ENCODE measurements at regions of chr5 and their contacts with region 1.

Region 1: DNA sequence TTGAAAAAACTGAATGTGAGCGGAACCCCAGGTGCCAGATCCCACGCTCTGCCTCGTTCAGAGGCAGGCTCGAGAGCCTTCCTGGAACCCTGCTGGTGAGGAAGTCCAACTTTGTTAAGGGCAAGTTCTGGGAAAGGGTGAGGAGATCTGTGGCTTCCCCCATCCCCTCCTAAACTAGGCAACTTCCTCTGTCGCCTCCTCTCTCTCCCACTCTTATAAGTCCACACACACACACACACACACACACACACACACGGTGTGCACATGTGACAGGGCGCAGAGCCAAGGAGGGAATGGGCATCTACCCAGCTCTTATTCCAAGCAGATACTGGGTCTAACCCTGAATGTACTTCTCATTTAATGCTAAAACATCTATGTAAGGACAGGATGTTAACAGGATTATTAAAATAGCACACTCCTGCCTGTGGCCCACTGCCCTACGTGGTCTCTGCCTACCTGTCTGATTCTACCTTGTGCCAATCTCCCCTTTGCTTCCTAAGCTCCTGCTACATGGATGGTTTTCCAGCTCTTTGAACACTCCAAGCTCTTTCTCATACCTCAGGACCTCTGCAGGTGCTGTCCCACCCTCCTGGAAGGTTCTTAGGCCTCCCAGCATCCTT is 72.4 kb upstream of the FBXW11 start:
- DNase-seq: no peak
- ATAC-seq: no peak
- H3K4me3 ChIP-seq: no peak overlapping the region
- H3K27ac ChIP-seq: no peak overlapping the region
- H3K4me1 ChIP-seq: peaks cover 4% of the 10 kb centered on the region; the same call in 1 of the 2 replicates
- H3K27me3 ChIP-seq: no peaks in the 10 kb centered on the region
- CTCF ChIP-seq: no peak
- POLR2A ChIP-seq: no peak
- RAD21 ChIP-seq: no peak

Region 2: GRCh38 chr5:172090976-172091547 is 12.2 kb after region 1 on chr5:
- CTCF ChIA-PET with region 1: interaction called, 6 read pairs
- POLR2A ChIA-PET with region 1: interaction called, 10 read pairs
- dilution Hi-C with region 1: no loop called
- in situ Hi-C with region 1: no loop called
- intact Hi-C with region 1: no loop called
- DNase-seq: no peak
- ATAC-seq: no peak
- H3K4me3 ChIP-seq: no peak overlapping the region
- H3K27ac ChIP-seq: no peak overlapping the region
- H3K4me1 ChIP-seq: no peaks in the 10 kb centered on the region
- H3K27me3 ChIP-seq: no peaks in the 10 kb centered on the region
- CTCF ChIP-seq: no peak
- POLR2A ChIP-seq: no peak
- RAD21 ChIP-seq: no peak

Measured in IMR-90 (cell line).